ENCODE measurements at regions of chr4 and their contacts with region 1.

Region 1: DNA sequence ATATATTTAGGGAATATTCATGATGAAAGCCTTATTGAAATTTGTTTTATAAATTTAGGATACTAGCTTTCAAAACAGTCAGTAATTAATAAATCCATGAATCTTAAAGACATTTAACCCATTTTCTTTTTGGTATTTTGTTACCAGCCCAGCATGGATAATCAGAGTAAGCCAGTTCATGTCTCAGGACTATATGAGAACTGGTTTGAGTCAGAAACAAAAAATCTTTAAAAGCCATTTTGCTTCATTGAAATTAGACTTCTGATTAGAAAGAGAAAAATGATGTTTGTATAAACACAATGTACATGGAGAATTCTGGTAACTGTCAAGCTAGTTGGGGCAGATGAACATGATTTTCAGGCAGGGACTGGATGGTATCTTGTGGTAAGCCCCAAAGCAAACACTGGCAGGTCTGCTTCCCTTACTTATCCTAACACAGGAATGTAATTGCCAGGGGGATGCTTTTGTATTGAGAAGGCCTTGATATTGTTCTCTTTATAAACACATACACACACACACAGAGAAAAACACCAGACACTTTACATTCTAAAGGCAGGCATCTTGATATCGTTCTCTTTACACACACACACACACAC is 9.4 kb downstream of the ARHGAP10 start:
- DNase-seq: peak; percentile 71
- ATAC-seq: peak; percentile 81
- H3K4me3 ChIP-seq: no peak overlapping the region
- H3K27ac ChIP-seq: peak overlapping the region; percentile 77; the same call in 1 of the 2 replicates
- H3K4me1 ChIP-seq: peaks cover 11% of the 10 kb centered on the region
- H3K27me3 ChIP-seq: no peaks in the 10 kb centered on the region
- CTCF ChIP-seq: no peak
- POLR2A ChIP-seq: no peak
- RAD21 ChIP-seq: no peak

Region 2: DNA sequence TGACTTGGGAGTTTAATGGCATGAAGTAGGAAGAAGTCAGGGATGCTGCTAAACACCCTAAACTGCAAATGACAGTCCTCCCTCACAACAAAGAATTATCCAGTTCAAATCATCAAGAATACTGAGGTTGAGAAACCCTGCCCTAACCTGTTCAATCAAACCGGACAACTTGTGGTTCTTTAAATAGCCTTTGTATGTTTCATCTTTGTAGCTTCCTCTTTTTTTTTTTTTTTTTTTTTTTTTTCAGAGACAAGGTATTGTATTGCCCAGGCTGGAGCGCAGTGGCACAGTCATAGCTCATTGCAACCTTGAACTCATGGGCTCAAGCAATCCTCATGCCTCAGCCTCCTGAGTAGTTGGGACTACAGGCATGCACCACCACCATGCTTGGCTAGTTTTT is 743.1 kb before region 1 on chr4:
- CTCF ChIA-PET with region 1: no interaction called
- POLR2A ChIA-PET with region 1: no interaction called
- dilution Hi-C with region 1: no loop called
- in situ Hi-C with region 1: no loop called
- intact Hi-C with region 1: no loop called
- DNase-seq: no peak
- ATAC-seq: no peak
- H3K4me3 ChIP-seq: no peak overlapping the region
- H3K27ac ChIP-seq: no peak overlapping the region
- H3K4me1 ChIP-seq: no peaks in the 10 kb centered on the region
- H3K27me3 ChIP-seq: no peaks in the 10 kb centered on the region; the same call in 1 of the 2 replicates
- CTCF ChIP-seq: no peak
- POLR2A ChIP-seq: no peak
- RAD21 ChIP-seq: no peak

Region 3: GRCh38 chr4:147730333-147730732 is 11.0 kb before region 1 on chr4:
- CTCF ChIA-PET with region 1: no interaction called
- POLR2A ChIA-PET with region 1: no interaction called
- dilution Hi-C with region 1: no loop called
- in situ Hi-C with region 1: no loop called
- intact Hi-C with region 1: no loop called
- DNase-seq: no peak
- ATAC-seq: no peak
- H3K4me3 ChIP-seq: no peak overlapping the region
- H3K27ac ChIP-seq: no peak overlapping the region
- H3K4me1 ChIP-seq: peaks cover 9% of the 10 kb centered on the region
- H3K27me3 ChIP-seq: no peaks in the 10 kb centered on the region
- CTCF ChIP-seq: no peak
- POLR2A ChIP-seq: no peak
- RAD21 ChIP-seq: no peak

Region 4: GRCh38 chr4:147755561-147756295 is 14.4 kb after region 1 on chr4:
- CTCF ChIA-PET with region 1: no interaction called
- POLR2A ChIA-PET with region 1: no interaction called
- dilution Hi-C with region 1: no loop called
- in situ Hi-C with region 1: no loop called
- intact Hi-C with region 1: loop called (anchors 2 kb)
- DNase-seq: peak; percentile 83
- ATAC-seq: peak; percentile 80
- H3K4me3 ChIP-seq: no peak overlapping the region
- H3K27ac ChIP-seq: peak overlapping the region; percentile 97
- H3K4me1 ChIP-seq: peaks cover 23% of the 10 kb centered on the region
- H3K27me3 ChIP-seq: no peaks in the 10 kb centered on the region
- CTCF ChIP-seq: no peak
- POLR2A ChIP-seq: no peak
- RAD21 ChIP-seq: no peak

Region 5: DNA sequence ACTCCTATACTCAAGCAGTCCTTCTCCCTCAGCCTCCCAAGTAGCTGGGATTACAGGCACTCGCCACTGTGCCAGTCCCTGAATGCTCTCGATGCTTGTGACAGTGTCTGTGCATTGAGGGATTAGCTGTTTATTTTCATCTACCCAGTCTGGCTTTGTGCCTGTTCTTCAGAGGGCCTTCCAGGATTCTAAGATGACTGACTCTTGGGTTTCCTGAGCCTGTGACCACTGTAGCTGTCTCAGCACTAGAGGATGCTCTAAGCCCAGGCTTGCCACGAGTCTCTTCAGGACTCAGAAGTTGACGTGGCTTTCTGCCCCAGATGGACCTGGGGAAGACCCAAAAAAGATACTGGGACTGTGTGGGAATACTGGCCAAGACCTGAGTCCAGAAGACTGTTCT is 192.0 kb after region 1 on chr4:
- CTCF ChIA-PET with region 1: no interaction called
- POLR2A ChIA-PET with region 1: no interaction called
- dilution Hi-C with region 1: no loop called
- in situ Hi-C with region 1: no loop called
- intact Hi-C with region 1: no loop called
- DNase-seq: peak; percentile 59
- ATAC-seq: peak; percentile 67
- H3K4me3 ChIP-seq: no peak overlapping the region
- H3K27ac ChIP-seq: no peak overlapping the region
- H3K4me1 ChIP-seq: peaks cover 4% of the 10 kb centered on the region
- H3K27me3 ChIP-seq: no peaks in the 10 kb centered on the region
- CTCF ChIP-seq: peak; percentile 53
- POLR2A ChIP-seq: no peak
- RAD21 ChIP-seq: peak; percentile 62

Region 6: GRCh38 chr4:148934926-148935578 is 1193.8 kb after region 1 on chr4:
- CTCF ChIA-PET with region 1: no interaction called
- POLR2A ChIA-PET with region 1: no interaction called
- dilution Hi-C with region 1: no loop called
- in situ Hi-C with region 1: no loop called
- intact Hi-C with region 1: no loop called
- DNase-seq: no peak
- ATAC-seq: no peak
- H3K4me3 ChIP-seq: no peak overlapping the region
- H3K27ac ChIP-seq: no peak overlapping the region
- H3K4me1 ChIP-seq: no peaks in the 10 kb centered on the region
- H3K27me3 ChIP-seq: no peaks in the 10 kb centered on the region
- CTCF ChIP-seq: no peak
- POLR2A ChIP-seq: no peak
- RAD21 ChIP-seq: no peak